IMR-90 (cell line): ENCODE measurements at regions of chr7 and their contacts with region 1.

Region 1: DNA sequence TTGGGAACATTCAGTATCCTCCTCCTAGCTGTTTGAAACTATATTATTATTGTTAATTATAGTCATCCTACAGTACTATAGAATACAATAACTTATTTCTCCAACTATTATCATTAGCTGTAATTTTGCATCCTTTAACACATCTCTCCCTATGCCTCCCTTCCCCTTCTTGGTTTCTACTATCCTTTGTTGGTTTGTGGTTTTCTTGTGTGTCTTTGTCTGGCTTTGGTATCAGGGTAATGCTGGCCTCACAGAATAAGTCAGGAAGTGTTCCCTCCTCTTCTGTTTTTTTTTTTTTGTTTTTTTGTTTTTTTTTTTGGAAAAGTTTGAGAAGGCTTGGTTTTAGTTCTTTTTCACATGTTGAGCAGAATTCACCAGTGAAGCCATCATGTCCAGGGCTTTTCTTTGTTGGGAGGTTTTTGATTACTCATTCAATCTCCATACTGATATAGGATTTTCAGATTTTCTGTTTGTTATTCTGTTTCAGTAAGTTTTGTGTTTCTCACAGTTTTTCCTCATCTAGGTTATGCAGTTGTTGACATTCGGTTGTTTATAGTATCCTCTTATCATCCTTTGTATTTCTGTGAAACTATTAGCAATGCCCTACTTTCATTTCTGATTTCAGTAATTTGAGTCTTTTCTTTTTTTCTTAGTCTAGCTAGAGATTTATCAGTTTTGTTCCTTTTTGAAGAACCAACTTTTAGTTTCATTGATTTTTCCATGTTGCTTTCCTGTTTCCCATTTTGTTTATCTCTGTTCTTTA is 21.6 kb downstream of the C1GALT1 start:
- DNase-seq: no peak
- ATAC-seq: no peak
- H3K4me3 ChIP-seq: no peak overlapping the region
- H3K27ac ChIP-seq: no peak overlapping the region
- H3K4me1 ChIP-seq: no peaks in the 10 kb centered on the region
- H3K27me3 ChIP-seq: no peaks in the 10 kb centered on the region
- CTCF ChIP-seq: no peak
- POLR2A ChIP-seq: no peak
- RAD21 ChIP-seq: no peak

Region 2: GRCh38 chr7:7190142-7190541 is 13.9 kb before region 1 on chr7:
- CTCF ChIA-PET with region 1: interaction called, 4 read pairs
- POLR2A ChIA-PET with region 1: no interaction called
- dilution Hi-C with region 1: no loop called
- in situ Hi-C with region 1: no loop called
- intact Hi-C with region 1: loop called (anchors 2 kb)
- DNase-seq: peak; percentile 74
- ATAC-seq: peak; percentile 93
- H3K4me3 ChIP-seq: no peak overlapping the region
- H3K27ac ChIP-seq: no peak overlapping the region
- H3K4me1 ChIP-seq: peaks cover 3% of the 10 kb centered on the region
- H3K27me3 ChIP-seq: no peaks in the 10 kb centered on the region
- CTCF ChIP-seq: no peak
- POLR2A ChIP-seq: no peak
- RAD21 ChIP-seq: no peak